ENCODE measurements at regions of chr5 and their contacts with region 1.

Region 1: DNA sequence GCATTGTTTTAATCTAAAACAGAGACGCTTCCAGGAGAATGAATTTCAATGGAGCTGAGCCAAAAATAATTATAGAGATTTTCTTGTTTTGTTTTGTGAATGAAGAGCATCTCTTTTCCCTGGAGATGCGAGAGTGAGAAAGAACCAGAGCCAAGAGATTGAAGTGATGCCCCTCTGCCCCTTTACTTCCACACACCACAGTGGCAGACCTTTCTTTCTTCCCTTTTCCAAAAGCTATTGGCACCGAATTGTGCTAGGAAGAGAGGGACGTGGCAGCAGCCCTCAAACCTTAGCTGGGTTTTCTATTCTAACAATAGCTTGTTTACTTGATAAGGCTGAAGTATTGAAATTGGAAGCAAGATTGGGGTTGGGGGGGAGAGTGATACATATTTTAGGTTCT is 133.0 kb upstream of the TMEM161B start:
- DNase-seq: no peak
- ATAC-seq: no peak
- H3K4me3 ChIP-seq: no peak overlapping the region
- H3K27ac ChIP-seq: no peak overlapping the region
- H3K4me1 ChIP-seq: peaks cover 0 to 19% (median 0%) of the 10 kb centered on the region in 12 donors
- H3K27me3 ChIP-seq: no peaks in the 10 kb centered on the region
- CTCF ChIP-seq: no peak
- POLR2A ChIP-seq: no peak

Region 2: DNA sequence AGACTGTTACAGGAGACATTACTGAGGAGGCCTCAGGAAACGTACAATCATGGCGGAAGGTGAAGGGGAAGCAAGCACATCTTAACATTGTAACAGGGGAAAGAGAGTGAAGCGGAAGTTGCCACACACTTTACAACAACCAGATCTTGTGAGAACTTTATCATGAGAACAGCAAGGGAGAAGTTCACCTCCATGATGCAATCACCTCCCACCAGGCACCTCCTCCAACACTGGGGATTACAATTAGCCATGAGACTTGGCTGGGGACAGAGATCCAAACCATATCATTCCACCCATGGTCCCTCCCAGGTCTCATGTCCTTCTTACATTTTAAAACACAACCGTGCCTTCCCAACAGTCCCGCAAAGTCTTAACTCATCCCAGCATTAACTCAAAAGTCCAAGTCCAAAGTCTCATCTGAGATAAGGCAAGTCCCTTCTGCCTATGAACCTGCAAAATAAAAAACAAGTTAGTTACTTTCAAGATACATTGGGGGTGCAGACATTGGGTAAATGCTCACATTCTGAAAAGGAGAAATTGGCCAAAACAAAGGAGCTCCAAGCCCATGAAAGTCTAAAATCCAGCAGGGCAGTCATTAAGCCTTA is 271.4 kb before region 1 on chr5:
- intact Hi-C with region 1: no loop called
- DNase-seq: no peak
- ATAC-seq: no peak
- H3K4me3 ChIP-seq: no peak overlapping the region
- H3K27ac ChIP-seq: no peak overlapping the region
- H3K4me1 ChIP-seq: no peaks in the 10 kb centered on the region
- H3K27me3 ChIP-seq: peaks cover 0 to 6% (median 0%) of the 10 kb centered on the region in 9 donors
- CTCF ChIP-seq: no peak
- POLR2A ChIP-seq: no peak

Region 3: DNA sequence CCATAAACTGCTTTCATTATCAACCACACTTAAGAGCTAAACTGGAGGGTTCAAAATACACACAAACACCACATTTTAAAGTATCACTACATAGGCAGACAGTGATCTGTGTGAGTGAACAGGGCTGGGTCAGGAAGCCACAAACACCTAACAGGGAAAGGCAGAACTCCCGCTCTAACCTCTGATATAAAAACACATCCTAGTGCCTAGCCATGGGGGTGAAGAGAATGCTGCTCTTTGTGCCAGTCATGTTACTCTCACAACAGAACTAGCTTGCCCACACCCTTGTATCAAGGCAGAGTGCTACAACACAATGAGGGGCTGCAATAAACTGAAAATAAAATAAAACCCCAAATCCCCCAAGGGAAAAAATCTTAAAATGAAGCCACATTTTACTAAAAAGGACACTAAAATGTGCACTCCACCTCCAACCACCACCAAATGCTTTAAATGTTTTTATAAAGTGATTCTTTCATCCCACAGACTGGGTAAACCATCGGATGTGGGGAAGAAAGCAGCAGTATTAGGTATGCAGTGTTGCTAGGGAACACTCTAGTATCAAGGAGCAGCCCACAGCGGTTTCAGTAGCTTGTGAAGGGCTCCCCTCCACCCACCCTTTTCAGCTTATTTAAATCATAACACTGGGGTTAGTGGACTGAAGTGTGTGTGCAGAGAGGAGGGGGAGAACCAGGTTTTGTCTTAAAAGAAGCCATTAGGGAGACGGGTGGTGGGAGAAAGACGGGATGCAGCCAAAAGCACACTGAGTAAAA is 197.5 kb before region 1 on chr5:
- intact Hi-C with region 1: no loop called
- DNase-seq: no peak
- ATAC-seq: peak in 1 of 4 donors; percentile 22
- H3K4me3 ChIP-seq: no peak overlapping the region
- H3K27ac ChIP-seq: no peak overlapping the region
- H3K4me1 ChIP-seq: no peaks in the 10 kb centered on the region
- H3K27me3 ChIP-seq: no peaks in the 10 kb centered on the region
- CTCF ChIP-seq: no peak
- POLR2A ChIP-seq: no peak

Region 4: DNA sequence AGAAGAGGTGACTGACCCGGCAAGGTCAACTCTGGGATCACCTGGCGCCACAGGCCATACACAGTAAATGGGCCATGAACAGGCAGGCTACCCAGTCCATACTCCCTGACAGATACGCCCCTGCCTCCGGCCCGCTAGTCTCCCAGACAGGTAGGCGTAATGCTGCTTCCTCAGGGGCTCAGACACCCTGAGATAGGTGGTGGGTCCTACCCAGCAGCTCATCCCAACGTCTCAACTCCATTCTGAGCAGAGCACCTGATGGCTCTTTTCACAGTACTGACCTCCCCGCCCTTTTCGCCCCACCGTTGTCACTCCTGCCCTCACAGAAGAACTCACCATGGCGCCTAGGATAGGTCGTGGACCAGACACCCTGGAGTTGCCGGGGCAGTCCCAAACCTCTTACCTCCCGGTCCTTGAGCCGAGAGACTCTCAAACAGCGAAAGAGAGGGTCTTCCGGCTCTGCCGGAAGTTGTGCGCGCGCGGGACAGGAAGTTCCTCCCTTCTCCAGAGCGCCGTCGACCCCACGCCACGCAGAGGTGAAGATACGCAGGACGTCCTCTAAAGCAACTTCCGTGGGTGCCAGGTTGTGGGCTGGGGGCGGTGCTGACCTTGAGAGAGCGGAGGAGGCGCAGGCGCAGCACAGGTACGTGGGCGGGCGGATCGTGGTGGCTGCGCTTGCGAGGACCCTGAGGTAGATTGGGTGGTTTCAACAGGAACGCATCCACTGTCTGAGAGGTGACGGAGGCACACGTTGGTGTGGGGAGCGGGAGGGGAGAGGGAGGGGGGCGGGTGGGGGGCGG is 133.1 kb before region 1 on chr5 and contains the start of gene TMEM161B:
- intact Hi-C with region 1: loop called in 1 of 10 experiments (anchors 10 kb)
- DNase-seq: peak; percentile 90 to 95 (median 94)
- ATAC-seq: peak; percentile 98 to 100 (median 100)
- H3K4me3 ChIP-seq: peak within 1 kb of the TSS; percentile 62 to 94 (median 88)
- H3K27ac ChIP-seq: peak within 1 kb of the TSS; percentile 22 to 84 (median 76)
- H3K4me1 ChIP-seq: peaks cover 0 to 45% (median 31%) of the 10 kb centered on the region in 12 donors
- H3K27me3 ChIP-seq: no peaks in the 10 kb centered on the region
- CTCF ChIP-seq: no peak
- POLR2A ChIP-seq: peak in 1 of 2 donors; percentile 61
- total RNA-seq, gene TMEM161B: 4.3 to 13.2 (median 10.3) TPM

Region 5: GRCh38 chr5:88279584-88279983 is 122.1 kb before region 1 on chr5:
- intact Hi-C with region 1: no loop called
- DNase-seq: no peak
- ATAC-seq: no peak
- H3K4me3 ChIP-seq: no peak overlapping the region
- H3K27ac ChIP-seq: no peak overlapping the region
- H3K4me1 ChIP-seq: no peaks in the 10 kb centered on the region
- H3K27me3 ChIP-seq: no peaks in the 10 kb centered on the region
- CTCF ChIP-seq: no peak
- POLR2A ChIP-seq: no peak